Panc1 (cell line): ENCODE measurements at regions of chr3 and their contacts with region 1.

Region 1: DNA sequence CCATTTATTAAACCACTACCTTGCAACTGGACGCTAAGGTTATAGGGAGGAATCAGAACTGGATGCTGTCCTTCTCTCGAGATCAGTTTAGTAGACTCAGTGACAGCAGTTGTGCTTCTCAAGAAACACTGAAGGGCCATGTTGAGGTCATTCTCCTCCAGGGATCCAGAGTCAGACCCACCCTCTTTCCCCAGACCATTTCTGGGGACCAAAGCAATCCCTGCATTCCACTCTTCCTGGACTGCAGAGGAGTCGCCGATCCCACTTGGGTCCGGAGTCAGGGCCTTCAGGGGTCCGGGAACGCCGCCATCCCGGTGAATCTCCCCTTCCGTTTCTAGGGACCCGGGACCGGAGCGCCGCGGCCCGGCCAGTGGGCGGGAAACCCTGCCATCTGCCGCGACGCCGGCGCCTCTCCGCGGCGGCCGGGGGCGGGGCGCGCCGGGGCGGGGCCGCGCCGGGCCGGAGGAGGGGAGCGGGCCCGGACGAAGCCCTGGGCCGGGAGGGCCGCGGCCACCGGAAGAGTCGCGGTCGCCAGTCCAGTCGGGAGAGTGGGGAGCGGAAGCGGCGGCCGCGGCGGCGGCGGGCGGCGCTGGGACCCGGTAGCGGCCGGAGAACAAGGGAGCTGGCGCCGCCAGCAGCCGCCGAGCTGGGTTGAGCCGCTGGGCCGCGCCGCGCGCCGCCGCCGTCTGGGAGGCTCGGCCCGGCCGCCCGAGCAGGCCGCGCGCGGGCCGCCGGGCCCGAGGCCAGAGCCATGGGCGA is at the start of gene DVL3:
- DNase-seq: no peak
- ATAC-seq: peak; percentile 94
- H3K4me3 ChIP-seq: peak within 1 kb of the TSS; percentile 88 to 93
- H3K27ac ChIP-seq: peak within 1 kb of the TSS; percentile 97
- H3K4me1 ChIP-seq: peaks cover 17% of the 10 kb centered on the region
- H3K27me3 ChIP-seq: no peaks in the 10 kb centered on the region
- CTCF ChIP-seq: no peak
- total RNA-seq, gene DVL3: 97.2 TPM

Region 2: GRCh38 chr3:184110316-184110725 is 44.7 kb before region 1 on chr3:
- CTCF ChIA-PET with region 1: no interaction called
- POLR2A ChIA-PET with region 1: interaction called, 12 read pairs
- in situ Hi-C with region 1: no loop called
- intact Hi-C with region 1: no loop called
- DNase-seq: peak; percentile 71
- ATAC-seq: peak; percentile 78; the same call in 1 of the 2 replicates
- H3K4me3 ChIP-seq: peak overlapping the region in 1 of 2 experiments; percentile 14; a peak in 2 of 4 replicates
- H3K27ac ChIP-seq: no peak overlapping the region
- H3K4me1 ChIP-seq: no peaks in the 10 kb centered on the region
- H3K27me3 ChIP-seq: no peaks in the 10 kb centered on the region
- CTCF ChIP-seq: no peak

Region 3: GRCh38 chr3:184174646-184175492 is 19.8 kb after region 1 on chr3 and contains the start of gene AP2M1:
- CTCF ChIA-PET with region 1: no interaction called
- POLR2A ChIA-PET with region 1: interaction called, 19 read pairs
- in situ Hi-C with region 1: no loop called
- intact Hi-C with region 1: no loop called
- DNase-seq: peak; percentile 94
- ATAC-seq: peak; percentile 93
- H3K4me3 ChIP-seq: peak within 1 kb of the TSS; percentile 80 to 86
- H3K27ac ChIP-seq: peak within 1 kb of the TSS; percentile 88
- H3K4me1 ChIP-seq: peaks cover 18% of the 10 kb centered on the region
- H3K27me3 ChIP-seq: no peaks in the 10 kb centered on the region
- CTCF ChIP-seq: no peak
- total RNA-seq, gene AP2M1: 335 TPM

Region 4: GRCh38 chr3:184399410-184399809 is 244.3 kb after region 1 on chr3:
- CTCF ChIA-PET with region 1: no interaction called
- POLR2A ChIA-PET with region 1: interaction called, 11 read pairs
- in situ Hi-C with region 1: no loop called
- intact Hi-C with region 1: no loop called
- DNase-seq: no peak
- ATAC-seq: no peak
- H3K4me3 ChIP-seq: no peak overlapping the region
- H3K27ac ChIP-seq: no peak overlapping the region
- H3K4me1 ChIP-seq: no peaks in the 10 kb centered on the region
- H3K27me3 ChIP-seq: peaks cover 4% of the 10 kb centered on the region; the same call in 1 of the 2 replicates
- CTCF ChIP-seq: no peak